ENCODE measurements at regions of chr19 and their contacts with region 1.

Region 1: DNA sequence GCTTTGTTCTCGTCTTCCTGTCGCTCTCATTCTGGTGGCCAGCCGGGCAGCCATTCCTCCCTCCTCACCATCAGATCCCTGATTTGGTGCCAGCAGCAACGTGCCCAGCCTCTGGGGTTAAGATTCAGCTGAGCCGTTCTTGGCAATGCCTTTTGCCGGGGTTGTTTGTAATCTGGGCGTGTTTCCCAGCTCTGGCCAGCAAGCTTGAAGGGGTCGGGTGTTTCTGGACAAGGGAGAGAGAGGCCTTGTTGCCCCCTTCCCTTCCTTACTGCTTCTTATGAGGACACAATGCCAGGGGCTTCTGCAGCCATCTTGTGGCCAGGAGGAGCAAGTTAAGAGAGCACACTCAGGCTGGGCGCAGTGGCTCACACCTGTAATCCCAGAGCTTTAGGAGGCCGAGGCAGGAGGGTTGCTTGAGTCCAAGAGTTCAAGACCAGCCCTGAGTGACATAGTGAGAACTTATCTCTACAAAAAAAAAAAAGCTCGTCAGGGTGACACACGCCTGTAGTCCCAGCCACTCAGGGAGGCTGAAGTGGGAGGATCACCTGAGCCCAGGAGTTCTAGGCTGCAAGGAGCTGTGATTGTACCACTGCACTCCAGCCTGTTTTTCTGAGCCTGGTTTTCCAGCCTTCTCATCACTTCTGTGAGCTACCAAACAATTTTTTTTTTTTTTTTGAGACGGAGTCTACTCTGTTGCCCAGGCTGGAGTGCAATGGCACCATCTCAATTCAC is 10.7 kb upstream of the CRTC1 start:
- DNase-seq: no peak
- H3K4me3 ChIP-seq: no peak overlapping the region
- H3K27ac ChIP-seq: no peak overlapping the region
- H3K4me1 ChIP-seq: peaks cover 0 to 2% (median 0%) of the 10 kb centered on the region in 4 experiments
- H3K27me3 ChIP-seq: no peaks in the 10 kb centered on the region

Region 2: DNA sequence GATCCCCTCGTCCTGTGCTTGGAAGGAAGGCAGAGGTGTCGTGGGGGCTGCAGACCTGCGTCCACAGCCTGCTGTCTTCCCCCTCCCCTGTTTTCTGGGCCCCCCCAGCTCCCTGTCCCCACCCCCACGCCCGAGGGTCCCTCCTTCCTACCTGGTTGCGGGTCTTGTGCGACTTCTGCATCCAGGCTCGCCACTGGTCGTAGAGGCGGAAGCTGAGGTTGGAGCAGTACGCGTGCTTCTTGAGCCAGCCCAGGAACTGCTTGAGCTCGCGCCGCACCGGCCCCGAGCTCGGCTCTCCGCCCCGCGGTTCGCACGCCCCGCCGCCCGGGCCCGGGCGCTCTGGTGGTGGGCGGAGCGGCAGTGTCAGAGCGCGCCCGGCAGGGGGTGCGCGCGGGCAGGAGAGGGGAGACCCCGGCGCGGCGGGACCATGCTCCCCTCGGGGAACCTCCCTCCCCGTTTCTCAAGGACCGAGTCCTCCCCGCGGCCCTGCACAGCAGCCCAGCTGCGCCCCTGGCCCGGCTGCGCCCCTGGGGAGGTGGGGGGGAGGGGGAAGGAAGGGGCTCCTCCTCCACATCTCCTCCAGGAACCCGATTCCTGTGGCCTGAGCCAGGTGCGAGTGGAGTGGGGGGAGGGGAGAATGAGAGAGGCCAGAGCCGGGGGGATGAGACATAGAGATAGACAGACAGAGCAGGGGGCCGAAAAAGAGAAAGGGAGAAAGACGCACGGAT is 78.5 kb before region 1 on chr19:
- CTCF ChIA-PET with region 1: interaction called, 12 read pairs
- POLR2A ChIA-PET with region 1: no interaction called
- DNase-seq: peak; percentile 67 to 83 (median 83)
- H3K4me3 ChIP-seq: peak overlapping the region in 6 of 7 experiments; percentile 11 to 57 (median 40)
- H3K27ac ChIP-seq: no peak overlapping the region
- H3K4me1 ChIP-seq: peaks cover 2 to 43% (median 34%) of the 10 kb centered on the region in 4 experiments
- H3K27me3 ChIP-seq: peaks cover 0 to 44% (median 8%) of the 10 kb centered on the region in 5 experiments